ENCODE measurements at regions of chr11 and their contacts with region 1.

Region 1: DNA sequence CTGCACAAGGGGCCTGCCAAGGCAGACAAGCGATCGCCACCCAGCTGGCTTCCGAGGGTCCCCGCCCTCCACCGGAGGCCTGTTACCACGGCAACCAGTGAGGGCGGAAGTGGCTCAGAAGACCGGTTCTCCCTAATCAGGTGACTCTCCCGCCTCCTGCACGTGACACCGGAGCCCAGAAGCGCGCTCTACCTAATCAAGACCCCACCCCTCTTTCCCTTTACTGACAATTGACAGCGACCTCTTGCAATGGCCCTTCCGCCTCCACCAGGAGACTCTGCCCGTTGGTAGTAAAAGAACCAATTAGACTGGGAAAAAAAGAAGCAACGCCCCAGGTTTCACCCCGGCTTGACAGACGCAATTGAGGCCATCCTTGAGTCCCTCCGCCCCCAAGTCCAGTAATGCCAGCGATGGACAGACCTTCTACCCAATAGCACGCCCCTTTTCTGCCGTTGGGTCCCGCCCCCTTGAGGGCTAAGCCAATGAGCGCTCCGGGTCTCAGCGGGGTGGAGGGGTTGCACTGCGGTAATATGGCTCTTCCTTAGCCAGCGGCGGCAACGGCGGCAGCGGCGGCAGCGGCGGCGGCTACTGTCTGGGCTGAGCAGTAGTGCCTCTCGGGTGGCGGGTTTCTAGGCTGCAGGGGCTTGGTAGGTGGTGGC is at the start of gene UVRAG:
- DNase-seq: peak; percentile 100
- ATAC-seq: peak; percentile 86
- H3K4me3 ChIP-seq: peak within 1 kb of the TSS; percentile 93
- H3K27ac ChIP-seq: peak within 1 kb of the TSS; percentile 94
- H3K4me1 ChIP-seq: peaks cover 39% of the 10 kb centered on the region
- H3K27me3 ChIP-seq: no peaks in the 10 kb centered on the region
- CTCF ChIP-seq: no peak
- EP300 ChIP-seq: no peak
- POLR2A ChIP-seq: peak; percentile 87
- RAD21 ChIP-seq: no peak
- polyA plus RNA-seq, gene UVRAG: 7.0 to 11.2 TPM

Region 2: DNA sequence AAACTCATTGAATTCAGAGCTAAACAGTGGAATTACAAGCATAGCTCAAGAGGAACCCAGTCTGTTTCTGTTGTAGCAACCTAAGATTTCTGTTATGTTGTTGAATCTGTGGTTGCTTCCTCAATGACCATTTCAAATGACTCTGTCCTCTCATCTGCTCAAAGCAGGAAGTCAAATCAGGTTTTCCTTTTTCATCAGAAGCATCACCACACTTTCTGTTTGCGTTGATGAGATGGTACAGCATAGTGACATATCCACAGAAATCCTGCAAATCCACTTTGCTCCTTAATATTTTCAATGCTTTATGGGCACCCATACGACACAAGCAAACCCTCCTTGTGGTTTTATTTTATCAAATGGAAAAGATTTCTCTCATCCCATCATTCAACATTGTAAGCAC is 1819.6 kb before region 1 on chr11:
- CTCF ChIA-PET with region 1: no interaction called
- POLR2A ChIA-PET with region 1: no interaction called
- RAD21 ChIA-PET with region 1: no interaction called
- SMC1A ChIA-PET with region 1: no interaction called
- in situ Hi-C with region 1: no loop called
- intact Hi-C with region 1: loop called (anchors 10 kb)
- DNase-seq: no peak
- ATAC-seq: peak; percentile 73
- H3K4me3 ChIP-seq: no peak overlapping the region
- H3K27ac ChIP-seq: peak overlapping the region; percentile 57
- H3K4me1 ChIP-seq: peaks cover 68% of the 10 kb centered on the region
- H3K27me3 ChIP-seq: no peaks in the 10 kb centered on the region
- CTCF ChIP-seq: no peak
- EP300 ChIP-seq: peak; percentile 36 to 77; a peak in 2 of 4 replicates
- POLR2A ChIP-seq: no peak
- RAD21 ChIP-seq: no peak

Region 3: DNA sequence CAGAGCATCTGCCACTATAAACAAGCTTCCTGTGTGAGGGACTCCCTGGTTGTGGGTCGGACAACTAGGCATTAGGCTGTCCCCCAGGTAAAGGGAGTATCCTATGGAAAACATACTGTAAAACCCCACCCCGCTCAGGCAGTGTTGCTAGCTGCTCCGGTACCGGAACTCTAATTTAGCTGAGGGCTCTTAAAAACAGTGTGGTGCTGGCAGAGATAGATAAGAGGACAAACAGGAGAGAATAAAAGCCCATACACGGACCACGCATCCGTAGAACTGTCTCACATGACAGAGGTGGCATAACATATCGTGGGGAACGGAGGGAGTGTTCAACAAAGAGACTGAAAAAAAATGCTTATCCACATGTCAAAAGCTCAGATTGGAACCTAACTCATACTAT is 100.6 kb before region 1 on chr11:
- CTCF ChIA-PET with region 1: no interaction called
- POLR2A ChIA-PET with region 1: no interaction called
- RAD21 ChIA-PET with region 1: no interaction called
- SMC1A ChIA-PET with region 1: no interaction called
- in situ Hi-C with region 1: no loop called
- intact Hi-C with region 1: no loop called
- DNase-seq: no peak
- ATAC-seq: no peak
- H3K4me3 ChIP-seq: no peak overlapping the region
- H3K27ac ChIP-seq: no peak overlapping the region
- H3K4me1 ChIP-seq: peaks cover 7% of the 10 kb centered on the region
- H3K27me3 ChIP-seq: no peaks in the 10 kb centered on the region
- CTCF ChIP-seq: no peak
- EP300 ChIP-seq: no peak
- POLR2A ChIP-seq: no peak
- RAD21 ChIP-seq: no peak

Region 4: DNA sequence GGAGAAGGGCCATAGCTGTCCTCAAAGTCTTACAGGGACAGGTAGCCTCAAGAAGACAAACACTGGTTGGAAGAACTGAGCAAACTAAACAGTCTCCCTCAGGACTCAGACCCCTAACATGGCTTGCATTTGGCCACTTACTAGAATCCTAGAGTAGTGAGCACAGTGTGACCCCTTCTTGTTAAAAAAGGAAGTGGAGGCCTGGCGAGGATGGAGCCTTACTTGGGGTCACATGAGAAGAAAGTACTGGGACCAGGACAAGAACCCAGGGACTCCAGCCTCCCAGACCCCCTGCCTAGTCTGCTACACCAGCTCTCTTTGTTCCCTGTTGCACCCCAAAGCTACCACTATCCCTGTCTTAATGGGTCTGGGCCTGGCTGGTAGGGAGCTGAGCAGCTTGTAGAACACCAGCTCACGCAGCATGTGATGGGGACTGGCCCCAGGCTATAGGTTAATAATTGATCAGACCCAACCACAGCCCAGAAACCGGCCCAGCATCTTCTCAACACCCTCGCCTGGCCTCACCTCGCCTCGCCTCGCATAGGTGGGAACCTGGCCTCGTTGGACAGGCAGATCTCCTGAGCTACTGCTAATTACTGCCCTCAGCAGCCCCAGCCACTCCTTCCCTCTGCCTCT is 28.6 kb before region 1 on chr11:
- CTCF ChIA-PET with region 1: interaction called, 8 read pairs
- POLR2A ChIA-PET with region 1: interaction called, 11 read pairs
- RAD21 ChIA-PET with region 1: interaction called, 3 read pairs
- SMC1A ChIA-PET with region 1: interaction called, 3 read pairs
- in situ Hi-C with region 1: no loop called
- intact Hi-C with region 1: no loop called
- DNase-seq: no peak
- ATAC-seq: peak; percentile 96
- H3K4me3 ChIP-seq: no peak overlapping the region
- H3K27ac ChIP-seq: no peak overlapping the region
- H3K4me1 ChIP-seq: no peaks in the 10 kb centered on the region
- H3K27me3 ChIP-seq: no peaks in the 10 kb centered on the region
- CTCF ChIP-seq: no peak
- EP300 ChIP-seq: no peak
- POLR2A ChIP-seq: no peak
- RAD21 ChIP-seq: no peak

Region 5: GRCh38 chr11:75836417-75836816 is 21.6 kb after region 1 on chr11:
- CTCF ChIA-PET with region 1: interaction called, 6 read pairs
- POLR2A ChIA-PET with region 1: interaction called, 6 read pairs
- RAD21 ChIA-PET with region 1: interaction called, 3 read pairs
- SMC1A ChIA-PET with region 1: interaction called, 11 read pairs
- in situ Hi-C with region 1: no loop called
- intact Hi-C with region 1: no loop called
- DNase-seq: no peak
- ATAC-seq: peak; percentile 84
- H3K4me3 ChIP-seq: peak overlapping the region; percentile 18; the same call in 1 of the 2 replicates
- H3K27ac ChIP-seq: peak overlapping the region; percentile 58
- H3K4me1 ChIP-seq: peaks cover 17% of the 10 kb centered on the region
- H3K27me3 ChIP-seq: no peaks in the 10 kb centered on the region
- CTCF ChIP-seq: no peak
- EP300 ChIP-seq: no peak
- POLR2A ChIP-seq: no peak
- RAD21 ChIP-seq: no peak

Region 6: DNA sequence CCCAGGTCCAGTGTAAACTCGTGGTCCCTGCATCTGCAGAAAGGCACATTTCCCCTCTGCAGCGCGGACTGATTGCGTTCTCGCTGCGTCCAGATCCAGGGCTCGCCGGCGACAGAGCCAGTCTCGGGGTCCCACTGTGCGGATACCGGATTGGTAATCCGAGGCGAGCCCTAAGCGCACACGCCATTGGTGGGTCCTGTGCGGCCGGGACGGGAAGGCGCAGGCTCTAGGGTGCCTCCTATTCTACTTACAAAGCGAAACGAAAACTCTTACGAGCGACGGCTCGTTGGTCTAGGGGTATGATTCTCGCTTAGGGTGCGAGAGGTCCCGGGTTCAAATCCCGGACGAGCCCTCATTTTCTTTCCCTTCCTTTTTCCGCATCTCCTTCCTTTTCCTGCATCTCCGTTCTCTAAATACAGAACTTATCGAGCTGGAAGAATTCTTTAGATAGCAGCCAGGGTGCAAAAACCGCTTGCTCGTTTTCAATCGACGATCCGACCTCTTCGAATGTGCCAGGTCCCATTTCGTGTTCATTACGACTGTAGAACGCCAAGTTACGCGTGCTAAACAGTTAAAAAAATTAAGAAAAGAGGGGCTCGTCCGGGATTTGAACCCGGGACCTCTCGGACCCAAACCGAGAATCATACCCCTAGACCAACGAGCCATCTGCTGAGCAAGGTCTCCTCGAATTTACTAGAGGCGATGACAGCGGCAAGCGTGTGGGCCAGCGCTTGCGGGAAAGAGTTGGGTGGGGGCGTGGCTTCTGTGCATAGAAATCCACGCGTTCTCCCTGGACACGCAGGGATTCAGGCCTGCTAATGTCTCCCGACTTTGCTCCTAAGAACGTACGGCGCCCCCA is 420.6 kb after region 1 on chr11:
- CTCF ChIA-PET with region 1: no interaction called
- POLR2A ChIA-PET with region 1: no interaction called
- RAD21 ChIA-PET with region 1: no interaction called
- SMC1A ChIA-PET with region 1: interaction called, 6 read pairs
- in situ Hi-C with region 1: no loop called
- intact Hi-C with region 1: loop called (anchors 5 kb)
- DNase-seq: peak; percentile 93
- ATAC-seq: peak; percentile 85
- H3K4me3 ChIP-seq: peak overlapping the region; percentile 80
- H3K27ac ChIP-seq: peak overlapping the region; percentile 73
- H3K4me1 ChIP-seq: peaks cover 34% of the 10 kb centered on the region
- H3K27me3 ChIP-seq: peaks cover 0 to 1% of the 10 kb centered on the region in 2 experiments; a peak in 1 of 4 replicates
- CTCF ChIP-seq: no peak
- EP300 ChIP-seq: peak in 1 of 2 experiments; percentile 73; a peak in 1 of 4 replicates
- POLR2A ChIP-seq: peak; percentile 77
- RAD21 ChIP-seq: no peak

Measured in GM12878 (cell line).